ENCODE measurements at regions of chr12 and their contacts with region 1.

Region 1: GRCh38 chr12:53947743-53948142 is 7.0 kb upstream of the HOXC12 start:
- DNase-seq: no peak
- H3K4me3 ChIP-seq: no peak overlapping the region
- H3K27ac ChIP-seq: no peak overlapping the region
- H3K4me1 ChIP-seq: peaks cover 25% of the 10 kb centered on the region
- H3K27me3 ChIP-seq: no peaks in the 10 kb centered on the region
- CTCF ChIP-seq: no peak

Region 2: DNA sequence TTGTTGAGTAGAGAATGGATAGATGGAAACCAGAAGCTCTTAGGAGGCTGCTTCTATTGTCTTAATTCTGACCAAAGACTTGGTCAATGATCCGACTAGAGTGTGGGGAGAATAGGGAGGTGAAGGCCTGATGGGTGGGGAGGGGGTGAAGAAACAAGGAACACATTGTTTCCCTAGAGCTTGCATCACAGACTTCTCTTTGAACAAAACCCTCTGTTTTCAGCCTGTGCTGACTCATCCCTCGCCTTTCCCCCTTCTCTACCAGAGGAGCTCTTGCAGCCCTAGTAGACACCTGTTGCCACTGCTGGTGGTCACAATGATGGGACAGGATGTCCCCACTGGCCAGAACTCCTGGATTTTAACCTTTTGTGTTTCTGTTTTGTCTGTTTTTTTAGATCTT is 149.2 kb before region 1 on chr12:
- CTCF ChIA-PET with region 1: interaction called, 12 read pairs
- POLR2A ChIA-PET with region 1: no interaction called
- intact Hi-C with region 1: no loop called
- DNase-seq: peak; percentile 40 to 86
- H3K4me3 ChIP-seq: no peak overlapping the region
- H3K27ac ChIP-seq: peak overlapping the region; percentile 64
- H3K4me1 ChIP-seq: peaks cover 78% of the 10 kb centered on the region
- H3K27me3 ChIP-seq: no peaks in the 10 kb centered on the region
- CTCF ChIP-seq: no peak

Region 3: GRCh38 chr12:53974084-53975063 is 26.6 kb after region 1 on chr12 and contains the start of gene HOTAIR:
- CTCF ChIA-PET with region 1: interaction called, 16 read pairs
- POLR2A ChIA-PET with region 1: no interaction called
- intact Hi-C with region 1: no loop called
- DNase-seq: peak in 1 of 2 experiments; percentile 49
- H3K4me3 ChIP-seq: peak within 1 kb of the TSS; percentile 72
- H3K27ac ChIP-seq: peak within 1 kb of the TSS; percentile 49; the same call in 1 of the 2 replicates
- H3K4me1 ChIP-seq: no peaks in the 10 kb centered on the region
- H3K27me3 ChIP-seq: no peaks in the 10 kb centered on the region
- CTCF ChIP-seq: no peak
- total RNA-seq, gene HOTAIR: 7.9 and 9.2 TPM in 2 replicates

Measured in PC-9 (cell line).